ENCODE measurements at regions of chr22 and their contacts with region 1.

Region 1: GRCh38 chr22:37199103-37199759 is 11.2 kb upstream of the C1QTNF6 start:
- DNase-seq: peak; percentile 99
- ATAC-seq: peak; percentile 99
- H3K4me3 Mint-ChIP-seq: peak overlapping the region; percentile 70
- H3K27ac Mint-ChIP-seq: no peak overlapping the region
- H3K4me1 Mint-ChIP-seq: peaks cover 33% of the 10 kb centered on the region
- H3K27me3 Mint-ChIP-seq: 0 out of 2 replicates have a peak, but pooled peaks cover 3% of the 10 kb centered on the region
- CTCF ChIP-seq: peak; percentile 67

Region 2: GRCh38 chr22:37098976-37099591 is 100.1 kb before region 1 on chr22:
- CTCF ChIA-PET with region 1: interaction called, 10 read pairs
- POLR2A ChIA-PET with region 1: no interaction called
- DNase-seq: peak; percentile 59
- ATAC-seq: peak; percentile 80
- H3K4me3 Mint-ChIP-seq: no peak overlapping the region
- H3K27ac Mint-ChIP-seq: no peak overlapping the region
- H3K4me1 Mint-ChIP-seq: peaks cover 5% of the 10 kb centered on the region; the same call in 1 of the 2 replicates
- H3K27me3 Mint-ChIP-seq: peaks cover 32% of the 10 kb centered on the region
- CTCF ChIP-seq: no peak

Region 3: DNA sequence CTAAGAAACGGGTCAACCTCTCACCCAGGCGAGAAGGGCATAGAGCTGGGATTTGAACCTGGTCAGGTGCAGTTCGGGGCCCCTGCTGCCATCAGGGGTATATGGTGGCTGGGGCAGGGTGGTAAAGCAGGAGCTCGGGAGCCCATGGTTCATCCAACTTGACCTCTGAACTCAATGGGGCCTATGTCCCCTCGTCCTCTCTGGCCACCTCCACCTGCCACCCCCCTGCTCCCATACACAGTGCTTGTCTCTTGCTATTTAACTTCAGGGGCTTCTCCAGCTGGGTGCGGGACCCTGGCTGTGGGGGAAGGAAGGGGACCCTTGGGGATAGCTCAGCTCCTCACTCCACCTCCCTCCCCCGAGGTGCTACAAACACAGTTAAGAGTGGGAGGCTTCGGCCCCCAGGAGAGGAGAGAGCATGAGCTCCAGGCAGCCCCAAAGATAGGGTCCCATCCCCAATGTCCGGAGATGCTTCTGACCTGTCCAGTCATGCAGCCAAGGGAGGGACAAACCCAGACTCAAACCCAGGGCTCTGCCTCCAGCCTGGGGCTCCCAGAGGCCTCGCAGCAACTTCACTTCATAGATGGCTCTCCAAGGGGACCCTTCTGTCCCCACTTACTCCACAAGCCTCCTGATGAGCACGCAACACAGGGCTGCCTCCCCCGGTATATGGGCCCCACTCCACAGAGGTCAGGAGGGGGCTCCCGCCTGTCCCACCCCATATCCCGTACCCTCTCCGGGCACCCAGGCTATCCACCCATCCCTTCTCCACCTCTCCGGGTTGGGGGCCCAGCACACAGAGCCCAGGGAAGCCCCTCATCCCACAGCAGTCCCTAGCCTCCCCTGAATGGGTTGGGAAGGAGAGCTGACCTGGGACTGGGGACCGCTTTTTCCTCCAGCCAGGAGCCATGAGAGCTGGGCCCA is 50.2 kb before region 1 on chr22:
- CTCF ChIA-PET with region 1: interaction called, 10 read pairs
- POLR2A ChIA-PET with region 1: no interaction called
- DNase-seq: no peak
- ATAC-seq: no peak
- H3K4me3 Mint-ChIP-seq: no peak overlapping the region
- H3K27ac Mint-ChIP-seq: no peak overlapping the region
- H3K4me1 Mint-ChIP-seq: peaks cover 15% of the 10 kb centered on the region
- H3K27me3 Mint-ChIP-seq: peaks cover 5% of the 10 kb centered on the region
- CTCF ChIP-seq: no peak

Region 4: DNA sequence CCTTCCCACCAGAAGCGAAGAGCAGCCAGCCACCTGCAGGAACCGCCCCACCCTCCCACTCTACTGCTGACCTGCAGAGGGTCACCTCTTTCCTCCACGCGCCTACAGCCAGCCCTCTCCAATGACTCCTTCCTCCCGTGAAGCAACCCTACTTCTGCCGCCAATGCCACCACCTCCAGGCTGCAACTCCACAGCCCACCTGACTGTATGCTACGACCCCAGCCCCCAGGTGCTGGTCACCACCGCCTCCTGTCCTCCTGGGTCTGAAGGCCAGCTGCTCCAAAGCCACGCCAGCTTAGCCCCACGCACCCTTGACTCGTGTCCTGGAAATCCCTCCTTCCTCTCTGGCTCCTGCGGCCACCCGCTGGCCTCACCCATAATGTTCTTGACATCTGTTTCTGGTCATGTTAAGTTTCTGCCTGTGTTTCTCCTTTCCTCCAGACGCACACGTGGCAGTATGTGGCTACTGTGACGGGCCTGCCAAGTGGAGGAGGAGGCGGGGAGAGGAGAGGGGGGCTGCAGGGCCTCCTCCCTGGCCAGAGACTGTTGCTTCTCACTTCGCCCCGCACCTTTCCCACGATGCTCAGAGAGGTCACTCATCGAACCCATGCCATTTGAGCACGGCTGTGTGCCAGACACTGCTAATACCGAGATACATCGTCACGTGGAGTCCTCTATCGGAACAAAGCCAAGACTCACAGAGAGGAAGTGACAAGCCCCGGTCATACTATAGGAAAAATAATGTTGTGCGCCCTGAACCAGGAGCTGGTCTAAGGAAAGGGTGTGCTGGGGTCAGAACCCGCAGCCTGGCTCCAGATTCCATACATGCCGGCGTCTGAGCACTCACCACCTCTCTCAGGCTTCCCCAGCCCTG is 22.8 kb before region 1 on chr22:
- CTCF ChIA-PET with region 1: interaction called, 12 read pairs
- POLR2A ChIA-PET with region 1: no interaction called
- DNase-seq: peak; percentile 5
- ATAC-seq: no peak
- H3K4me3 Mint-ChIP-seq: no peak overlapping the region
- H3K27ac Mint-ChIP-seq: no peak overlapping the region
- H3K4me1 Mint-ChIP-seq: peaks cover 35% of the 10 kb centered on the region
- H3K27me3 Mint-ChIP-seq: no peaks in the 10 kb centered on the region; the same call in 1 of the 2 replicates
- CTCF ChIP-seq: no peak

Region 5: DNA sequence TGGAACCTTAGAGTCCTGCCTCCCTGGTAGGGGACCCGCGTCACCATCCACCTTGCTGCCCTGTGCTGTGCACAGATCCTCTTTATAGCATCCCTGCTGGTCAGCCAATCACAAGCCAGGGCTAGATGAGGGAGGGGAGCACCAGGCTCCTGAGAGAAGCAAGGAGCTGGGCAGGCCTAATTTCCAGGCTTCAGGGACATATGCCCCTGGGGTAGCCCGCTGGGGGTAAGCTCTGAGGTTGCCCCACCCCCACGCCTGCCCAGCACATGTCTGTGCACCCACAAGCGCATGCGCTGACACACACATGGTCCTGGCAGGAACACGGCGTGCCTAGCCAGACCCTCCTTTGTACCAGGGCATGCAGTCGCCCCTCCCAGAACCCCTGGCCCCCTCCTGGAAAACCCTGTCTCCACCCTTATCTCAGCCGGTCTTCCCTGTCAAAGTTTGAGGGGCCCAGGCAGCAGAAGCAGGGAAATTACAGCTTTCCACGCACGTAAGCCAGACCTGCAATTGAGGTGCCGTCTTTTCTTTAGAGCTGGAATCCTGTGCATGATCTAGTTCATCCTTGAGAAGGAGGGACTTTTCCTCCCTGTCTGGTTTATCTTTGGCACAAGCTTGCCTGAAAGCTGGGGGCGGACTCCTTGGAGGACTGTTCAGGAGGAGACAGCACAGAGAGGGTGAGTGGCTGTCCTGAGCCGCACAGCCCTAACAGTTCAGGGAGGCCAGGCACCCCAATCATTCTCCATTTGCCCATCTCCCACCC is 11.0 kb after region 1 on chr22:
- CTCF ChIA-PET with region 1: interaction called, 21 read pairs
- POLR2A ChIA-PET with region 1: no interaction called
- DNase-seq: no peak
- ATAC-seq: no peak
- H3K4me3 Mint-ChIP-seq: no peak overlapping the region
- H3K27ac Mint-ChIP-seq: no peak overlapping the region
- H3K4me1 Mint-ChIP-seq: peaks cover 12% of the 10 kb centered on the region
- H3K27me3 Mint-ChIP-seq: peaks cover 6% of the 10 kb centered on the region; the same call in 1 of the 2 replicates
- CTCF ChIP-seq: no peak

Region 6: DNA sequence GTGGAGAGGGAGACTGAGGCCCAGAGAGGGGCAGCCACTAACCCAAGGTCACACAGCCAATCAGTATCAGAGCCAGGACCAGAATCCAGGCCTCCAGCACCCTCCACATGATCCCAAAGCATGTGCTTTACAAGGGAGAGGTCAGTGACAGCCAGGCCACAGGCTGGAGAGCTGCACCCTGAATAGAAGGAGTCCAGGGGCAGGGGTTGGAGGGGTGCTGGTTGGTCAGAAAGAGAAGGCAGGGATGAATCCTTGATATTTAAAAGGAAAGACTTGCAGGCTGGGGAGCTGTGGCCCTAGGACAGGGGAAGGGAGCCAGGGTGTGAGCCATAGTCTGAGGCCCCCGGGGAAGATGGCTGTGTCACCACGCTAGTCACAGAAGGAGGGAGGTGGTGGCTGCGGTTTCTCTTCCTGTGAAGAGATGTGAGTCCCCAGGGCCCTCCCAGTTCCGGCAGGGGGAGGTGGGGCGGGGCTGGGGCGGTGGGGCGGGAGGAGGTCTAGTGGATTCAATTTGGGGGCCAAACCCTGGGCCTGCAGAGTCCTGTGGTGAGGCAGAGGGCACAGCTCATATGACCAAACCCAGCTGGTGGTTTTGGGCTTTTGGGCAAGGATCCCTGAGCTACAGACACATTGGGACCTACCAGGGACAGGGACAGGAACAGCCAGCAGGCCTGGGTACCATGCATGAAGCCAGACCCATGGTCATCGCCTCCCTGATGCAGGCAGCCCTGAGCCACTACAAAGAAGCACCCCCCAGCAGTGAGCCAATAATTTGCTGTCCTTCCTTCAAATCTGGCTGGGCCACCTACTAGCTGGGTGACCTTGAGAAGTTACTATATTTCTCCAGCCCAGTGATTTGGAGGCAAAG is 30.8 kb after region 1 on chr22:
- CTCF ChIA-PET with region 1: interaction called, 21 read pairs
- POLR2A ChIA-PET with region 1: no interaction called
- DNase-seq: no peak
- ATAC-seq: no peak
- H3K4me3 Mint-ChIP-seq: no peak overlapping the region
- H3K27ac Mint-ChIP-seq: no peak overlapping the region
- H3K4me1 Mint-ChIP-seq: peaks cover 3% of the 10 kb centered on the region; the same call in 1 of the 2 replicates
- H3K27me3 Mint-ChIP-seq: no peaks in the 10 kb centered on the region
- CTCF ChIP-seq: no peak

Region 7: GRCh38 chr22:37316875-37317371 is 117.7 kb after region 1 on chr22:
- CTCF ChIA-PET with region 1: no interaction called
- POLR2A ChIA-PET with region 1: no interaction called
- DNase-seq: peak; percentile 80
- ATAC-seq: peak; percentile 86
- H3K4me3 Mint-ChIP-seq: no peak overlapping the region
- H3K27ac Mint-ChIP-seq: no peak overlapping the region
- H3K4me1 Mint-ChIP-seq: peaks cover 11% of the 10 kb centered on the region
- H3K27me3 Mint-ChIP-seq: no peaks in the 10 kb centered on the region; the same call in 1 of the 2 replicates
- CTCF ChIP-seq: peak; percentile 88

Region 8: DNA sequence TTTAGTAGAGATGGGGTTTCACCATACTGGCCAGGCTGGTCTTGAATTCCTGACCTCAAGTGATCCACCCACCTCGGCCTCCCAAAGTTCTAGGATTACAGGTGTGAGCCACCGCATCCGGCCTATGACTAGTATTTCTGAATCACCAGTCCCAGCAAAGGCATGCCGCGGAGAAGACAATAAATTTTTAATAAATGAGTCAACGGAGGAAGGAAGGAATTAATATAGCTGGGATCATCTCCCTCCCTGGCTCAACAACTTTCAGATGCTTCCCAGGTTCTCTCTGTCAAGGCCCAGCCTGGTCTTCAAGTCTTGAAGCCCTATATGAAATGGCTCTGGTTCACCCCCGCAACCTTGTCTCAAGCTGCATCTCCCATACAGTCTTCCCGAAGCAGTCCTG is 128.8 kb after region 1 on chr22:
- CTCF ChIA-PET with region 1: no interaction called
- POLR2A ChIA-PET with region 1: no interaction called
- DNase-seq: no peak
- ATAC-seq: no peak
- H3K4me3 Mint-ChIP-seq: no peak overlapping the region
- H3K27ac Mint-ChIP-seq: no peak overlapping the region
- H3K4me1 Mint-ChIP-seq: peaks cover 32% of the 10 kb centered on the region
- H3K27me3 Mint-ChIP-seq: peaks cover 51% of the 10 kb centered on the region
- CTCF ChIP-seq: no peak

Region 9: DNA sequence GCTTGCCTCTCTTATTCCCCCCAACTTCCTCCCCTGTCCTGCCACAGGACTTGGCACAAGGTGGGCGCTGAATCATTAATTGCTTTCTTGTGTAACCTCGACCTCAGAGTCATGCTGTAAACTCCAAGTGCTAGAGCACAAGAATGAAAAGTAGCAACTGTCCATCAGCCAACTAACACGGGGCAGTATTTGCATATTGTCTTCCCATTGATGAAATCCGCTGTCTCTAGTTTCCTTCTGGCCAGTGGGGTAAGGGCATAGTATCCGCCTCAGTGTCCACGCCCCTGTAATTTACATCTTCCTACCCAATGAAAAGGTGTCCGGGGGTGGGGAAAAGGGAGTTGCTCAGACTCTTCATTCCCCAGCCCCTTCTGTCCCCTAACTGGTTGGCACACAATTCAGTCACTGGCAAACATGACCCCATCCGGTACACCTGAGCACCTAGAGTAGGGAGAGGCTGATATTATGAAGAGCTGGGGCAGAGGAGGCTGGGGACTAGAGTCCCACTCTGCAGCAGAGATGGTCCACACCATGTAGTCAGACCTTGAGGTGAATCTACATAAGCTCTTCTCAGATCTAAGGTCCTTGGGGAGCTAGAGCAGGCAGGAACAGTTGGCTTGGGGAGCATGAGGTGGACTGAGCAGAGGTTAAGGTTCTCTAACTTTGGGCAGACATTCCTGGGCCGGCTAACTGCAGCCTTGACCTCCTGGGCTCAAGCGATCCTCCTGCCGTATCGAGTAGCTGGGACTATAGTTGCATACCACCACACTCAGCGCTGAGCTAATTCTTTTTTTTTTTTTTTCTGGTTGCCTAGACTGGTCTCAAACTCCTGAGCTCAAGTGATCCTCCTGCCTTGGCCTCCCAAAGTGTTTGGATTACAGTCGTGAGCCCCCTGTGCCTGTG is 402.6 kb after region 1 on chr22:
- CTCF ChIA-PET with region 1: no interaction called
- POLR2A ChIA-PET with region 1: no interaction called
- DNase-seq: peak; percentile 69
- ATAC-seq: peak; percentile 98
- H3K4me3 Mint-ChIP-seq: peak overlapping the region; percentile 48
- H3K27ac Mint-ChIP-seq: peak overlapping the region; percentile 88
- H3K4me1 Mint-ChIP-seq: peaks cover 23% of the 10 kb centered on the region
- H3K27me3 Mint-ChIP-seq: no peaks in the 10 kb centered on the region; the same call in 1 of the 2 replicates
- CTCF ChIP-seq: no peak

Measured in WTC11 (cell line).